Common myeloid progenitor, CD34-positive (primary cell): ENCODE measurements at regions of chr16 and their contacts with region 1.

Region 1: GRCh38 chr16:4506450-4506849 is 30.3 kb downstream of the HMOX2 start:
- DNase-seq: peak; percentile 78 to 87 (median 82)
- H3K4me3 ChIP-seq: no peak overlapping the region
- H3K27ac ChIP-seq: peak overlapping the region; percentile 27 to 57
- H3K4me1 ChIP-seq: peaks cover 16 to 33% (median 31%) of the 10 kb centered on the region in 4 experiments
- H3K27me3 ChIP-seq: no peaks in the 10 kb centered on the region

Region 2: GRCh38 chr16:4487955-4488498 is 18.4 kb before region 1 on chr16:
- CTCF ChIA-PET with region 1: interaction called, 20 read pairs
- POLR2A ChIA-PET with region 1: interaction called, 3 read pairs
- DNase-seq: no peak
- H3K4me3 ChIP-seq: no peak overlapping the region
- H3K27ac ChIP-seq: peak overlapping the region in 1 of 2 experiments; percentile 18
- H3K4me1 ChIP-seq: peaks cover 10 to 11% (median 10%) of the 10 kb centered on the region in 4 experiments
- H3K27me3 ChIP-seq: no peaks in the 10 kb centered on the region

Region 3: DNA sequence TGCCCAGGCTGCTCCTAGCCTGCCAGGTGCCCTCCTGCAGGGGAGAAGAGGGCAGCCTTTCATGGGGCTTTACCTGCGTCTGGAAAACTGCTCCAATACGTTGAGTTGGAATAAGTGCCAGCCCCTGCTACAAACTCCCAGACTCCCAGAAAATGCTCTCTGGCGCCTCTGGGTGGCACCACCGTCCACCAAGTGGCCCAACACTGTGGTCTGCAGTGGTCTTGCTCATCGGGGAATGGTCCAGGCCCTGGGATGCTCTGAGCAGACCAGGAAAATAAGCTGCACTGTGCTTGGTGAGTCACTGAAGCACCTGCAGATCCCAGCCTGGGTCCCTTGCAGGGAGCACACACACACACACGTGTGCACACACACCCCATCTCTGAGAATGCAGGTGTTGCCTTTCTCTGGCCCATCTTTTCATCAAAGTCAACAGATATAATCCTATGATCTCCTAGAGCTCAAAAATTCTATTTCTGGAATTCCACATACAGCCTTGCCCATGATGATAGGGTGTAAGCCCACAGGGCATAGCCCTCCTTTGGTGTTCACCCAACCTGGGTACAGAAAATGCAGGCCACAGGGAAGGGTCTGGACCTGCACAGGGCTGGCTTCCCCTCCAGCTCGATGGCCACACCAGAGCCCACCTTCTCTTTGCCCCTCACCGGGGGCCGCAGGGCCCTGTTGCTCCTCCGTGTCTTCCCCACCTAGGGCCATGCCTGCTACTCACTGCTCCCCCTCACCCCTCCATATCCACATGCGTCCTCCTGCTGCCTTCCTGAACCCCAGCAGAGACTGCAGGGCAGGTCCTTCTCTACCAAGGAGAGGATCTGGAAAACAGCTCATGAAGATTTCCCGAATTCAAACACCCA is 11.6 kb after region 1 on chr16:
- CTCF ChIA-PET with region 1: interaction called, 57 read pairs
- POLR2A ChIA-PET with region 1: no interaction called
- DNase-seq: peak in 2 of 3 donors; percentile 25 to 34
- H3K4me3 ChIP-seq: no peak overlapping the region
- H3K27ac ChIP-seq: no peak overlapping the region
- H3K4me1 ChIP-seq: peaks cover 17 to 74% (median 52%) of the 10 kb centered on the region in 4 experiments
- H3K27me3 ChIP-seq: no peaks in the 10 kb centered on the region

Region 4: DNA sequence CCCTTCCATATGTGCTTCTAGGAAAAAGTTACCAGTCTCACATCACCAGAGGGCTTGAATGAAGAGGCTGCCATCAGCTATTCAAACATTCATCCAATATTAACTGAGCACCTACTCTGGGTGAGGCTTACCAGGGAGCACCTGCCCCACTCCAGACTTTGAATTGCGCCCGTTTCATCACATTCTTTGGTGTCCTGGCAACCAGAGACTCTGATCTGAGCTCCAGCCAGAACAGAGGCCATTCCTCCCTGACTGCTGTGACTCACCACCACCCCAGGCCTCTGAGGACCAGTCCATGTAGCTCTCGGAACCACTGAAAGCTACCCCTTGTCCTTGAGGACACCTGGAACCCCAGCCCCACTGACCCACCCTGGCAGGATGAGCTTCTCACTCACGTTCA is 49.7 kb after region 1 on chr16 and contains the start of gene C16orf96:
- CTCF ChIA-PET with region 1: interaction called, 375 read pairs
- POLR2A ChIA-PET with region 1: no interaction called
- DNase-seq: no peak
- H3K4me3 ChIP-seq: no peak within 1 kb of the TSS
- H3K27ac ChIP-seq: no peak within 1 kb of the TSS
- H3K4me1 ChIP-seq: no peaks in the 10 kb centered on the region
- H3K27me3 ChIP-seq: no peaks in the 10 kb centered on the region

Region 5: DNA sequence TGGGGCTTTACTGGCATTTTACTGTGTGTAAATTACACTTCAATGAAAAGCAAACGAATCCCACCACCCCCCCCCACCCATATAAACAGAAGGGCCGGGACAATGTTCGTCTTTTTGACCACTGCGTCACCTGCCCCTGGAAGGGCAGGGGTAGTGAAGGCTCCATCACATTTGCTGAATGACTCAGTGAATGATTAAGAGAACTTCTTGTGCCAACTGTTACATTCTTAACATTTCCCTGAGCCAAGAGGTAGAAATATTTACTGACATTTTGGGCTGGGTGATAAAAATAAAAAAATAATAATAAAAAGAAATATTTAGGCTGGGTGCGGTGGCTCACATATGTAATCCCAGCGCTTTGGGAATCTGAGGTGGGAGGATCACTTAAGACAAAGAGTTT is 73.8 kb after region 1 on chr16:
- CTCF ChIA-PET with region 1: interaction called, 105 read pairs
- POLR2A ChIA-PET with region 1: interaction called, 3 read pairs
- DNase-seq: no peak
- H3K4me3 ChIP-seq: no peak overlapping the region
- H3K27ac ChIP-seq: no peak overlapping the region
- H3K4me1 ChIP-seq: peaks cover 0 to 5% (median 4%) of the 10 kb centered on the region in 4 experiments
- H3K27me3 ChIP-seq: no peaks in the 10 kb centered on the region

Region 6: GRCh38 chr16:4616047-4616811 is 109.8 kb after region 1 on chr16:
- CTCF ChIA-PET with region 1: interaction called, 32 read pairs
- POLR2A ChIA-PET with region 1: no interaction called
- DNase-seq: peak; percentile 100
- H3K4me3 ChIP-seq: peak overlapping the region; percentile 26 to 90 (median 55)
- H3K27ac ChIP-seq: peak overlapping the region; percentile 62 to 94
- H3K4me1 ChIP-seq: peaks cover 2 to 55% (median 47%) of the 10 kb centered on the region in 4 experiments
- H3K27me3 ChIP-seq: no peaks in the 10 kb centered on the region